ENCODE measurements at regions of chr3 and their contacts with region 1.

Region 1: GRCh38 chr3:49110780-49111179 is 6.2 kb upstream of the QARS1 start:
- DNase-seq: no peak
- H3K4me3 ChIP-seq: no peak overlapping the region
- H3K27ac ChIP-seq: no peak overlapping the region
- H3K4me1 ChIP-seq: no peaks in the 10 kb centered on the region
- H3K27me3 ChIP-seq: no peaks in the 10 kb centered on the region
- CTCF ChIP-seq: no peak
- POLR2A ChIP-seq: no peak

Region 2: GRCh38 chr3:49133226-49133951 is 22.6 kb after region 1 on chr3:
- intact Hi-C with region 1: loop called (anchors 1 kb)
- DNase-seq: peak; percentile 78 to 84
- H3K4me3 ChIP-seq: peak overlapping the region; percentile 67 to 89 (median 73)
- H3K27ac ChIP-seq: peak overlapping the region; percentile 91 to 95
- H3K4me1 ChIP-seq: peaks cover 5 to 10% of the 10 kb centered on the region in 2 donors
- H3K27me3 ChIP-seq: no peaks in the 10 kb centered on the region
- CTCF ChIP-seq: no peak
- POLR2A ChIP-seq: no peak

Measured in breast epithelium (tissue), 4 donors.